MCF 10A (cell line): ENCODE measurements at regions of chr3 and their contacts with region 1.

Region 1: DNA sequence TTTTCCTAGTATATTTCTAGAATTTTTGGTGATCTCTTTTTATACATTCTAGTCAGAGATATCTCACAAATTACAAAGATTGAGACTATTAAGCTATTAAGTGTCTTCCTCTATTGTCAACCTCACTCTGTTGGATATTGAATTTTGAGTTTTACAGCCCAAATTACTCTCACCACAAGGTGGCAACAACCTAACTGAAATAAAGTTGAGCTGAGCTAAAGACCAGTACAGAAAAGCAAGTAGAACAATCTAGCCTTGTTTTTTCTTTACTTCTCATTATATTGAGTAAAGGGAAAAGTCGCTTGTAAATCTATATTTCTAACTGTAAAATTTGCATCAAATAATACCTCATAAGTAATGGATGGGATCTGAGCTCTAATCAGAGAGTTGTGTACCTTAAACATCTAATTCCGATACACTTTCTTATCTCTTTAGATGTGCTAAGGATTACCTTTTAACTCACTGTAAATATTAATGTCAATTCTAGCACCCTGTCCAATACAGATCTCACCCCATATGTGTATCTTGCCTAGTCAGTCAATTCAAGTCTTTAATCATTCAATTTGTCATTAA is 13.6 kb upstream of the COMMD2 start:
- DNase-seq: peak; percentile 34
- H3K4me3 Mint-ChIP-seq: no peak overlapping the region
- H3K27ac Mint-ChIP-seq: no peak overlapping the region
- H3K4me1 Mint-ChIP-seq: no peaks in the 10 kb centered on the region
- H3K27me3 Mint-ChIP-seq: no peaks in the 10 kb centered on the region
- CTCF ChIP-seq: peak; percentile 49

Region 2: DNA sequence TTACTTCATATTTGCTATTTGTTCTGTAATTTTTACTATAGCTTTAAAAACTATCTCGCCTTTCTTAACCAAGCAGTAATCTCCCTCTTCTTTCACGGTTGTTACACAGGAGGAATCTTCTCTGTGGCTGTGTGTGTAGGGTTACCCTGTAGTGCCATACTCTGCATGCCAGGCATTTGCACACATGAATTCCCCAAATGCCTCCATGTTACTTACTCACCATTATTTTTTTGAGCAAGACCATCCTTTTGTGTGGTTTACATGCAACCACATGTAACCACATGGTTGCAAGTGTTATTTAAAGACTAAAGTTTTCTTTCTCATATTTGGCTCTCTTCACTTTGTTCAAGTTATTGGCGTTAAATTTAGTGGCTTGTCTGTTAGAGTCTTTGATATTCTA is 590.9 kb before region 1 on chr3:
- CTCF ChIA-PET with region 1: no interaction called
- POLR2A ChIA-PET with region 1: no interaction called
- intact Hi-C with region 1: no loop called
- DNase-seq: no peak
- H3K4me3 Mint-ChIP-seq: no peak overlapping the region
- H3K27ac Mint-ChIP-seq: no peak overlapping the region
- H3K4me1 Mint-ChIP-seq: peaks cover 11% of the 10 kb centered on the region
- H3K27me3 Mint-ChIP-seq: no peaks in the 10 kb centered on the region
- CTCF ChIP-seq: no peak

Region 3: GRCh38 chr3:149777414-149778214 is 11.8 kb after region 1 on chr3:
- CTCF ChIA-PET with region 1: interaction called, 51 read pairs
- POLR2A ChIA-PET with region 1: interaction called, 3 read pairs
- intact Hi-C with region 1: no loop called
- DNase-seq: no peak
- H3K4me3 Mint-ChIP-seq: no peak overlapping the region
- H3K27ac Mint-ChIP-seq: no peak overlapping the region
- H3K4me1 Mint-ChIP-seq: no peaks in the 10 kb centered on the region
- H3K27me3 Mint-ChIP-seq: no peaks in the 10 kb centered on the region
- CTCF ChIP-seq: no peak

Region 4: GRCh38 chr3:149902498-149903139 is 136.8 kb after region 1 on chr3:
- CTCF ChIA-PET with region 1: interaction called, 3 read pairs
- POLR2A ChIA-PET with region 1: no interaction called
- intact Hi-C with region 1: loop called (anchors 10 kb)
- DNase-seq: peak; percentile 0
- H3K4me3 Mint-ChIP-seq: no peak overlapping the region
- H3K27ac Mint-ChIP-seq: no peak overlapping the region
- H3K4me1 Mint-ChIP-seq: peaks cover 12% of the 10 kb centered on the region
- H3K27me3 Mint-ChIP-seq: no peaks in the 10 kb centered on the region
- CTCF ChIP-seq: no peak